ENCODE measurements at regions of chr17 and their contacts with region 1.

Region 1: DNA sequence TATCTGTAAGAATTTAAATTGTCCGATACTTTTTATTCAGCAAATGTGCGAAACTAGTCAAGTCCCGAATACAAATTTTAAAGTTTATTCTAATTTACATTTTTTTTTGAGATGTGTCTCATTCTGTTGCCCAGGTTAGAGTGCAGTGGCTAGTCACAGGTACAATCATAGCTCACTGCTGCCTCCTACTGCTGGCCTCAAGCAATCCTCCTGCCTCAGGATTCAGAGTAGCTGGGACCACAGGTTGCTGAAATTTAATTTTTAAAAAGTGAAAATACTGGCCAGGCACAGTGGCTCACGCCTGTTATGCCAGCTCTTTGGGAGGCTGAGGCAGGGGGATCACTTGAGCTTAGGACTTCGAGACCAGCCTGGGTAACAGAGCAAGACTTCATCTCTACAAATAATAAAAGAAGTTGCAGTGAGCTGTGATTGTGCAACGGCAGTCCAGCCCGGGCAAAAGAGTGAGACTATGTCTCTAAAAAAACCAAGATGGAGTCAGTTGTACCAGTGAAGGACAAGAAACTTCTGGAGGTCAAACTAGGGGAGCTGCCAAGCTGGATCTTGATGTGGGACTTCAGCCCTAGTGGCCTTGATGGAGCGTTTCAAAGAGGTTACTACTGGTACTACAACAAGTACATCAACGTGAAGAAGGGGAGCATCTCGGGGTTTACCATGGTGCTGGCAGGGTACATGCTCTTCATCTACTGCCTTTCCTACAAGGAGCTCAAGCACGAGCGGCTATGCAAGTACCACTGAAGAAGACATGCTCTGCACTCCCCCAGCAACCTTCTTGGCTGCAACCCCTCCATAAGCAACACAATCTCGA is 5.6 kb downstream of the POLG2 start:
- DNase-seq: peak in 28 of 35 experiments; percentile 11 to 72 (median 38)
- ATAC-seq: peak in 3 of 4 experiments; percentile 36 to 67 (median 63)
- H3K4me3 ChIP-seq: no peak overlapping the region
- H3K4me3 Mint-ChIP-seq: no peak overlapping the region
- H3K27ac ChIP-seq: no peak overlapping the region
- H3K27ac Mint-ChIP-seq: no peak overlapping the region
- H3K4me1 ChIP-seq: peaks cover 22 to 26% of the 10 kb centered on the region in 2 experiments
- H3K4me1 Mint-ChIP-seq: peaks cover 32 to 40% (median 40%) of the 10 kb centered on the region in 3 donors
- H3K27me3 ChIP-seq: no peaks in the 10 kb centered on the region
- H3K27me3 Mint-ChIP-seq: no peaks in the 10 kb centered on the region

Region 2: GRCh38 chr17:64506576-64507477 is 15.6 kb after region 1 on chr17 and contains the start of gene CEP95:
- CTCF ChIA-PET with region 1: interaction called, 3 to 31 read pairs
- POLR2A ChIA-PET with region 1: interaction called, 16 to 72 read pairs
- DNase-seq: peak in 34 of 35 experiments; percentile 90 to 98 (median 95)
- ATAC-seq: peak; percentile 63 to 76 (median 69)
- H3K4me3 ChIP-seq: peak within 1 kb of the TSS; percentile 91 to 99
- H3K4me3 Mint-ChIP-seq: peak within 1 kb of the TSS; percentile 97 to 100 (median 100)
- H3K27ac ChIP-seq: peak within 1 kb of the TSS; percentile 99
- H3K27ac Mint-ChIP-seq: peak within 1 kb of the TSS; percentile 99 to 100
- H3K4me1 ChIP-seq: peaks cover 19 to 34% of the 10 kb centered on the region in 2 experiments
- H3K4me1 Mint-ChIP-seq: peaks cover 62 to 72% (median 62%) of the 10 kb centered on the region in 3 donors
- H3K27me3 ChIP-seq: no peaks in the 10 kb centered on the region
- H3K27me3 Mint-ChIP-seq: no peaks in the 10 kb centered on the region
- total RNA-seq, gene CEP95: 77.0 to 168 (median 91.9) TPM

Measured in T-cell (primary cell).